Activated CD4-positive, alpha-beta T cell treated with anti-CD3 and anti-CD28 coated beads, Interleukin-2, amount 10 ng/mL, durations not matched to agents 24 days and 14 days (primary cell): ENCODE measurements at regions of chr3 and their contacts with region 1.

Region 1: DNA sequence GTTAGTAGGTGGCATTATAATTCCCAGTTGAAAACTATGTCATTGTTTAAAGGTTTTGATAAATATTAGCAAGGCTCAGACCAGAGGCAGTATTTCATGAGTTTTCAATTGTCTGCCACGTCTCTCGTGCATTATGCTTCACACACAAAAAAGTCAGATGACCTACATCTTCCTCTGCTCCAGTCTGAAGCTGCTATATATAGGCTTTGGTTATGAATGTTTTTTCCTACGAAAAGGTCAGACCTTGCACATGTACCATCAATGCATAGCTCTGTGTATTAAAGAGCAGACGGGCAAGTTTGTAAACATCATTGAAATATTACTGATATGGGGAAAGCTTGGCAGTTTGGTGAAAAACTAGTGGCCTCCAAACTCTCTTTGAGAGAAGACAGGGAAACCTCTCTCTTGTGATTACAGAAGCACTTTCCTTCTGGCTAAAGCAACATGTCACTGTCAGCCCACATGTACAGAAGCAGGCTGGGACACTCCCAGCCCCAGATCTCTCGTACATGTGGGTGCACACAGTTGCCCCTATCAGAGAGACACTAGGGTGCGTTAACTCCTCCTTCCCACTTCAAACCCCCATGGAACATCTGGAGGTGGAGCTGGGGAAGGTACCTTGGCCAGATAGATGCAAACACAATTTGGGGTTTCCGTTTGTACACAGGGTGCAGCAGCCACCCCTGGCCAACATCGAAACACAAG is 184.0 kb upstream of the BCL6 start:
- DNase-seq: no peak
- H3K4me3 Mint-ChIP-seq: peak overlapping the region; percentile 16
- H3K27ac Mint-ChIP-seq: peak overlapping the region; percentile 89
- H3K4me1 Mint-ChIP-seq: peaks cover 52% of the 10 kb centered on the region
- H3K27me3 Mint-ChIP-seq: peaks cover 1% of the 10 kb centered on the region

Region 2: DNA sequence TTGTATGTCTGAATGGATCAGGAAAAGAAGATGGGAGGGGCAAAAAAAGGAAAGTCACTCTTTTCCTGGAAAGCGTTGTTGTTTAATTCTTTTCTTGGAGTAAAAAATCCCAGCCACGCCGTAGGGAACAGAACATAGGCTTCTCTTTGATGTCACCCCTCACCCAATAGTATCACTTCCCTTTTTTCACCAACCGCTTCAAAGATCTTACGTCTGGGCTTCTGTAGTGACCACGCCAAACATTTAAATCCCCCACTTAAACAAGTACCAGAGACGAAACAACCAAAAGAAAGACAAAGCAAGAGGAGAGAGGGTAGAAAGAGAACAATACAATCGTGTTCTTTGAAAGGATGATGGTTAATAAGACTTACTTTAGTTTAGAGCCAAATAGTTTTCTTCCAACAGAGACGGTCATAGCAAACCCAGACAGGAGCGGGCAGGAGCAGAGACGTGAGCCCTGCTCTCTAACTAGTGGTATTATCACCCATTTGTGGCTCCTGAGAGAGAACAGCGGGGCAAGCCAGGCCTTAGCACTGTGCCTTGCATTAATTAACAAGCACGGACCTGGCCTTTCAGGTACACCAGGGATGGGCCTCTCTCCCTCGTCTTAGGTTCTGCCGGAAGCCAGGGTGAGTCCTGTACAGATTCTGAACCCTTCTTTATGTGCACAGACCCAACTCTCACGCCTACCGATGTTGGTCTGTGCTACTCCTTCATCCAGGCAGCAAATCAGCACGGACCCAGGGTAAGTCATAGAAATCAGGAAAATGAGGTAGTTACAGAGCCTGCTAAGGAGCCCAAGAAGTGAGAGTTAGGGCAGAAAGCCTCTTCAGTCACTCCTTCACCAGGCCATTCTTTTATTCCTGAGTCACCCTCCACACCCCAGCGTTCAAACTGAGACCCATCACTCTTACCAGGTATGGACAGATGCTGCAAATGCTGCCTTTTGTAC is 155.8 kb before region 1 on chr3:
- intact Hi-C with region 1: no loop called
- DNase-seq: no peak
- H3K4me3 Mint-ChIP-seq: no peak overlapping the region
- H3K27ac Mint-ChIP-seq: peak overlapping the region; percentile 31
- H3K4me1 Mint-ChIP-seq: peaks cover 50% of the 10 kb centered on the region
- H3K27me3 Mint-ChIP-seq: no peaks in the 10 kb centered on the region

Region 3: DNA sequence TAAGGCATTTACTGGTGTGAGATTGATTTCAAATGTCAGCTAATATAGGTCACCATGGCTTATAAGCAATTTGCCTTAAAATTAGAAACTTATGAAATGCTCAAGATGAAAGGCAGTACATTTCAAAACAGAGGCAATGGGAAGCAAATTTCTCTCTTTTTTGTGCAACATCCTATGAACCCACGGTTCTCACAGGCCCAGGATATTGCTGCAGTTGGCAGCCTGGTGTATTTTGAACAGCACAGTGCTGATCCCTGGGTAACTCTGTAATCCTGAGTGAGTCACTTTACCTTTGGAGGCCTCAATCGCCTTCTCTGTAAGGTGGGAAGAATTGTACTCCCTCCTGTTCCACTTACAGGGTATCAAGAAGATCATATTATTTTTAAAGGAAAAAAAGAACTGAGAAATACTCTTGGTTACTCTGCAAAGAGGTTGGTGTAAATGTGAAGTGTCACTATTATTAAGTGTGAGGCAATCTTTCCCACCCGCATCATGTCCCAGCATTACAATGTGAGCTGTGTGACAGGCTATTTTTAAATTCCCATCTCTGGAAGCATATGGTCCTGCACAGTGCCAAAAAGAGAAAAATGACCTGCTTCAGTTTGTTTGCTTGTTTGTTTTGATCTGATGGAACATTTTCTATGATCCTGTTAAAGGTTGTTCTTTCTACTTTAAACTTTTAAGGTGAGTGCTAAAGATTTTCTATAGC is 34.6 kb after region 1 on chr3:
- intact Hi-C with region 1: loop called (anchors 1 kb)
- DNase-seq: no peak
- H3K4me3 Mint-ChIP-seq: peak overlapping the region; percentile 31
- H3K27ac Mint-ChIP-seq: no peak overlapping the region
- H3K4me1 Mint-ChIP-seq: peaks cover 11% of the 10 kb centered on the region
- H3K27me3 Mint-ChIP-seq: peaks cover 6% of the 10 kb centered on the region

Region 4: DNA sequence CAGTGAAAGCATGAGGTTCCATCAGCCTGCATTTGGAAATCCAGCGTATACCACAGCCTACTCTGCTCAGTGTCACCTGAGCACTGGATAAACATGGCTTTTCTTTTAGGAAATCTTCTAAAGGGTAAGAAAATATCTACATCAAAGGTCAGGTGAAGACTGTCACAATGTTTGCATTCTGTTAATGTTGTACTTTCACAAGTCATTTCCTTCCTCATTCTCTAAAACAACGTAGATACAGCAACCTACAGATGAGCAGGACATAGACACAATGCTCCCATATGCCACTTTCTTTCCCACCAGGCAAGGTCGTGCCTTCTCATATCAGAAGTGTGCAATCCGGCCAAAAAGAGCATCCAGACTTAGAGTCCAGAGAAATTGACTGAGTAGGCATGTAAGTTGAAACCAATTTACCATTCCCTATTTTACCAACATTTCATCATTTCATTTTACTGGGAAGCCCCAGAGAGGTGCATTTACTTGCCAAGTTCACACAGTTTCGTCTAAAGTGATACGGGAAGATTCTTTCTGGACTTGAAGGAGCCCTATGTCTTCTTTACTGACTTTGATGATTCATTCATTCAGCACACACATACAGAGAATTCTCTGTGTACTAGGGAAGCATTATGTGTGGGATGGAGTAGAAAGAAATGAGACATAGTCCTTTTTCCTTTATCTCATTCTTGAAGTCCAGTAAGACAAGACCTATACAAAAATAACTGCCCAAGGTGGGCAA is 194.1 kb after region 1 on chr3:
- intact Hi-C with region 1: loop called (anchors 1 kb)
- DNase-seq: no peak
- H3K4me3 Mint-ChIP-seq: no peak overlapping the region
- H3K27ac Mint-ChIP-seq: peak overlapping the region; percentile 45
- H3K4me1 Mint-ChIP-seq: peaks cover 17% of the 10 kb centered on the region
- H3K27me3 Mint-ChIP-seq: peaks cover 5% of the 10 kb centered on the region